OCI-LY7 (cell line): ENCODE measurements at regions of chrX and their contacts with region 1.

Region 1: DNA sequence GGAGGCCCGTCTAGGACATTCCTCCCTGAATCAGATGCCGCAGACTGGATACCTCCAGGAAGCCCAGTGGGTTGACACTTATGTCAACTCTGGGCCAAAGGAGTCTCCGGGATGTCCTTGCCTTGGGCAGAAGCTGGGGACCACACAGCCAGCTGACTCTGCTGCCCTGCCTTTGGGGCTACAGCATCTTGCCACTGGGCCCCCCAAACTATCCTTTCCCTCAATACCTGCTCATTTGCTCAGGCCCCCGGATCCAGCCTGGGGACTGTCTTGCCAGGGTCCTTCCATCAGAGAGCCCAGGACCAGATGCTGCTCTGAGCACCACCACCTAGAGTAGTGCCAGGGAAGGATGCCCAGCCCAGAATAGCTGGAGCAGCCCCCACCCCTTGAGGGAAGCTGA is 19.0 kb downstream of the RAB33A start:
- DNase-seq: no peak
- H3K4me3 ChIP-seq: no peak overlapping the region
- H3K27ac ChIP-seq: no peak overlapping the region
- H3K4me1 ChIP-seq: peaks cover 13% of the 10 kb centered on the region
- CTCF ChIP-seq: no peak

Region 2: DNA sequence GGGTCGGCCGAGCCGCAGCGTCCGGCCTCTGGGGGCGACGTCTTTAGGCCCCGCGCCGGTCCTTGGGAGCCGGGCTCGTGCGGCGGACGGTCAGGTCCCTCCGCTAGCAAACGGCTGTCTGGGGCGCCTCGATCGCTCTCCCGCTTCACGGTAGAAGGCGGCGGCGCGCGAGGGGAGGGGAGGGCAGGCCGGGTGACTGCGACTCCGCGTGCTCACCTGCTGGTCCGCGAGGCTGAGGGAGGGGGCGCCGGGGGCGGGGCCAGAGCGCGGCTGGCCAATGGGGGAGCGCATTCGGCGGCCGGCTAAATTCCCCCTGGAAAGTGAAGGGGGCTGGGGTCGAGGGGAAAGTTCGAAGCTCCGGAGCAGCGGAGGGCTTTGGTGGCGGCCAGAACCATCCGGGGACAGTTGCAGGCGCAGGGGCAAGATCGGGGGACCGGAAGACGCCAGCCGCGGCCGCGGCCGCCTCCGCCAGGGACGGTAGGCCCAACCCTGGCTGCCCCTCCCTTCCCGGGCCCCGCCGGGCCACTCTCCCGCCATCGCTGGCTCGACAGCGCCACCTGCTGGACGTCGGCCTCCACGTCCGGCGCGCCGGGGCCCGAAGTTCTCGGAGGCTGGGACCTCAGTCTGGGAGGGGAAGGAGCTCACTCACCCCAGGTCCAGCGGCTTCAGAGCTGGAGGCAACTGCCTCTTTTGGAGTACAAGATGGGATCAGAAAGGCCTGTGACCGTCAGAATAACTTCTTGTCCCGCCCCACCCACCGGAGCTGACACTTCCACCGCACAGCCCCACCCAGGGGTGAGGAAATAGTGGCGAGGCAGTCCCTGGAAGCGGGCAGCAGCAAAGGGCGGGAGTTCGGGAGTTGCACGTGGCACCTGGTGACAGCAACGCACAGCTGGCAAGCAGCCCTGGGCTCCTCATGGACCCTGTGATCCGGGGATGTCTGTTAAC is 130.4 kb before region 1 on chrX:
- CTCF ChIA-PET with region 1: interaction called, 3 read pairs
- POLR2A ChIA-PET with region 1: no interaction called
- intact Hi-C with region 1: loop called (anchors 5 kb)
- DNase-seq: peak; percentile 76
- H3K4me3 ChIP-seq: peak overlapping the region; percentile 66
- H3K27ac ChIP-seq: no peak overlapping the region
- H3K4me1 ChIP-seq: peaks cover 10% of the 10 kb centered on the region
- CTCF ChIP-seq: peak; percentile 80

Region 3: GRCh38 chrX:130139474-130140201 is 51.2 kb before region 1 on chrX:
- CTCF ChIA-PET with region 1: no interaction called
- POLR2A ChIA-PET with region 1: interaction called, 3 read pairs
- intact Hi-C with region 1: loop called (anchors 5 kb)
- DNase-seq: no peak
- H3K4me3 ChIP-seq: no peak overlapping the region
- H3K27ac ChIP-seq: no peak overlapping the region
- H3K4me1 ChIP-seq: no peaks in the 10 kb centered on the region
- CTCF ChIP-seq: no peak

Region 4: DNA sequence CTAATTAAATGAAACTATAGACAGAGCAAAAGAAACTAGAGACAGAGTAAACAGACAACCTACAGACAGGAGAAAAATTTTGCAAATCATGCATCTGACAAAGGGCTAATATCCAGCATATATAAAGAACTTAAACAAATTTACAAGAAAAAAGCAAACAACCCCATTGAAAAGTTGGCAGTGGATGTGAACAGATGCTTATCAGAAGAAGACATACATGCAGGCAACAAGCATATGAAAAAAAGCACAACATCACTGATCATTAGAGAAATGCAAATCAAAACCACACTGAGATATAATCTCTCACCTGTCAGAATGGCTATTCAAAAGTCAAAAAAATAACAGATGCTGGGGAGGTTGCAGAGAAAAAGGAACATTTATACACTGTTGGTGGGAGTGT is 63.1 kb after region 1 on chrX:
- CTCF ChIA-PET with region 1: no interaction called
- POLR2A ChIA-PET with region 1: no interaction called
- intact Hi-C with region 1: no loop called
- DNase-seq: no peak
- H3K4me3 ChIP-seq: no peak overlapping the region
- H3K27ac ChIP-seq: no peak overlapping the region
- H3K4me1 ChIP-seq: no peaks in the 10 kb centered on the region
- CTCF ChIP-seq: no peak